ENCODE measurements at regions of chr2 and their contacts with region 1.

Region 1: DNA sequence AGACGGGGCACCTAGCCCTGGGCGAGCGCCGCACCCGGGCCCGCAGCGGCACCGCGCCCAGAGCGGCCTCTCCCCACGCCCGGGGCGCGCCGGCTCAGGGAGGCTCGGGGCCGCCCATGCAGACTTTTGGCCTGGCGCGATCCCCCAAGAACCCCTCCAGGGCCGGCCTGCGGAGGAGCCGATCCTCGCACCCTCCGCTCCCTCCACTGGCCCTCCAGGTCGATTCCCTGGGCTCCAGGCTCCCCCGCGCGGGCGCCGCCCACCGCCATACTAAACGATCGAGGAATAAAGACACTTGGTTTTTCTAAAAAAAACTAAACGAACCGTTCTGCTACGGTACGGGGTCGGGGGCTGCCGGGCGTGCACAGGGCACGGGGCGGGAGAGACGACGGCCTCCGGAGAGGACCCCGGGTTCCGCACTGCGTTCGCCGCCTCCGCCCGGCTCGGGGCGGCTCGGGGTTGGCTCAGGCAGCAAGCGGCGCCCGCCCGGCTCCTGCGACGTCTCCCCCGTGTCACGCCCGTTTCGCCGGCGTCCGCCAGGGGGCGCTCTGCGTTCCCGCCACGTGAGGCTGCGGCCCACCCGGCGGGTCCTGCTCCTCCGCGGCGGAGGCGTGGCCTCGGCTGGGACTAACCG is 365 bp upstream of the KHK start:
- DNase-seq: peak; percentile 98

Region 2: GRCh38 chr2:26959331-26959730 is 126.9 kb before region 1 on chr2:
- intact Hi-C with region 1: loop called (anchors 2 kb)
- DNase-seq: no peak

Region 3: DNA sequence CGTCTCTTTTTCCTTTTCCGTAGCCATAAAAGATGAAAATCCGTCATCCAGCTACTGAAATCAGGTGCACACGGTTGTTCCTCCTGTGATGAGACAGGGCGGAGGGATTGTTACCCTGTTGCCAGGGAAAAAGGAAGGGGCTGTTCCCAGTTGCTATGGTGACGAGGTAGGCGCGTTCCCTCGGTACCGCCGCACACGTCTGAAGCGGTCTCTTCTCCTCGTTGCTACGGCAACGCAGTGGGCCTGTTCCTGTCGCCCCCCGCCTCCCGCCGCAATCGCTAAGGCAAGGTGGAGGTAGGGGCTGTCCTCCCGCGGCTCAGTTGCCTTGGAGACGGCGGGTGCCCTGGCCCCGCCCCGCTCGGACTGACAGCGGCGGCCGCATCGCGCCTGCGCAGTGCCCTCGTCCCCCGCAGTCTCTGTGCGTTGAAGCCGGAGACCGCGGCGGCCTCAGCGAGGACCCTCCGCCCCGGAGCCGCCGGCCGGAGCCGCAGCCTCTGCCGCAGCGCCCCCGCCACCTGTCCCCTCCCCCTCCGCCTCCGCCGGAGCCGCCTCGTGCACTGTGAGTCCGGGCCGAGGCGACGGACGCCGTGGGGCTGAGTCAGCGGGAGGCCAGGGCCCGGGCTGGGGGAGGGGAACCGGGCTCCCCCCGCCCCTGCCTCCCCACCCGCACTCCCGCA is 115.8 kb before region 1 on chr2 and contains the start of gene MAPRE3:
- intact Hi-C with region 1: loop called (anchors 2 kb)
- DNase-seq: peak; percentile 91
- total RNA-seq, gene MAPRE3: 43.1 TPM

Region 4: DNA sequence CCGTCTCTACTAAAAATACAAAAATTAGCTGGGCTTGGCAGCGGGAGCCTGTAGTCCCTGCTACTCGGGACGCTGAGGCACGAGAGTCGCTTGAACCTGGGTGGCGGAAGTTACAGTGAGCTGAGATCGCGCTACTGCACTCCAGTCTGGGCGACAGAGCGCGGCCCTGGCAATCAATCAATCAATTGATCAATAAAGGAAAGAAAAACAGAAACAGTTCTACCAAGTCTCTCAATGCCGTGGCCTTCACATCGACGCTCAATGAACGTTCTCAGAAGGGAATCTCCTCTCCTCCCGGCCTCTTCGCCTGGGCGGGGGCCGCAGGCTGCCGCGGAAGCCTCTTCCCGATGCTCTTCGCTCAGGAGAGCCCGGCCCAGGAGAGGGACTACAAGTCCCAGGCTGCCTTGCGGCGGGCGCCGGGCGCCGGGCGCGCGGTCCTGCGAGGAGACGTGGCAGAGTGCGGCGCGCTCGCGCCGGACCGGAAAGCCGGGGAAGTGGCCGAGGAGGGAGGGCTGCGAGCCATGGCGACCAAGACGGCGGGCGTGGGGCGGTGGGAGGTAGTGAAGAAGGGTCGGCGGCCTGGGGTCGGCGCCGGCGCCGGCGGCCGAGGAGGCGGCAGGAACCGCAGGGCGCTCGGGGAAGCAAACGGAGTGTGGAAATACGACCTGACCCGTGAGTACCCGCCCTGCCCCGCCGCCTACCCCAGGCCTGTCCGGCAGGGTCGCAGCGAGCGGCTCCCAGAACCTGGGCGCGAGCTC is 53.5 kb before region 1 on chr2 and contains the start of gene TMEM214:
- intact Hi-C with region 1: loop called (anchors 2 kb)
- DNase-seq: peak; percentile 96
- total RNA-seq, gene TMEM214: 40.3 TPM

Region 5: GRCh38 chr2:27050281-27050995 is 35.8 kb before region 1 on chr2:
- intact Hi-C with region 1: loop called (anchors 2 kb)
- DNase-seq: peak; percentile 92

Region 6: GRCh38 chr2:27071277-27071989 is 14.8 kb before region 1 on chr2 and contains the start of gene OST4:
- intact Hi-C with region 1: loop called (anchors 1 kb)
- DNase-seq: peak; percentile 98
- total RNA-seq, gene OST4: 339 TPM

Region 7: DNA sequence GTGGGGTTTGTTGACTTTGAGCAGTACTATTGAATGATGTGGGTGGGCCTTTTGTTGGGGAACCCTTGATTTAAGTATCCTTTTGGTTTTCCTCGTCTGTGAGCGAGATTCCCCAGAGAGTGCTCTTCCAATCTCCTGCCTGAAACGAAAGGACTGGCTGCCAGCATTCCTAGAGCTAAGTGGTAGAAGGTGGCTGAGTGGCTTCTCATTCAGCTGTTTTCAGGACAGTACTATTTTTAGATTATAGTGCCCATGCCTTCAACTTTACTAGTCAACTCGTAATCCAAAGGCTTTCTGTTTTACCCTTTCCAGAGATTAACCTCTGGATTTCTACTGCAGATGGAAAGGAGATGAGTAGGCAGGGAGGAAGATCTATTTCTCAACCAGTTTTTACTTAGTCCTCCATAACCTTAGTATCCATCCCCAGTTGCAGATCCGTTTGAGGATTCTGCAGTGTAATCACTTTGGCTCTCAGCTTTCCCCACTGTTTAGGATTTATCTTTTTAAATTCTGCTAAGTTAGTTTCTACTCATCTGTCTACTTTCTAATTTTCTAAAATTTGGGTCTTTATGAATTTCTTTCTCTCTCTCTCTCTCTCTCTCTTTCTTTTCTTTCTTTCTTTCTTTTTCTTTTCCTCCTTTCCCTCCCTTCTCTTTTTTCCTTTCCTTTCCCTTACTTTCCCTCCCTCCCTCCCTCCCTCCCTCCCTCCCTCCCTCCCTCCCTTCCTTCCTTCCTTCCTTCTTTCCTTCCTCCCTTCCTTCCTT is 586.7 kb after region 1 on chr2:
- intact Hi-C with region 1: no loop called
- DNase-seq: no peak